ENCODE measurements at regions of chr11 and their contacts with region 1.

Region 1: GRCh38 chr11:82719361-82720105 is 14.1 kb downstream of the FAM181B start:
- DNase-seq: no peak
- ATAC-seq: no peak
- H3K4me3 ChIP-seq: no peak overlapping the region
- H3K27ac ChIP-seq: no peak overlapping the region
- H3K4me1 ChIP-seq: no peaks in the 10 kb centered on the region
- H3K27me3 ChIP-seq: no peaks in the 10 kb centered on the region
- CTCF ChIP-seq: no peak
- POLR2A ChIP-seq: no peak

Region 2: DNA sequence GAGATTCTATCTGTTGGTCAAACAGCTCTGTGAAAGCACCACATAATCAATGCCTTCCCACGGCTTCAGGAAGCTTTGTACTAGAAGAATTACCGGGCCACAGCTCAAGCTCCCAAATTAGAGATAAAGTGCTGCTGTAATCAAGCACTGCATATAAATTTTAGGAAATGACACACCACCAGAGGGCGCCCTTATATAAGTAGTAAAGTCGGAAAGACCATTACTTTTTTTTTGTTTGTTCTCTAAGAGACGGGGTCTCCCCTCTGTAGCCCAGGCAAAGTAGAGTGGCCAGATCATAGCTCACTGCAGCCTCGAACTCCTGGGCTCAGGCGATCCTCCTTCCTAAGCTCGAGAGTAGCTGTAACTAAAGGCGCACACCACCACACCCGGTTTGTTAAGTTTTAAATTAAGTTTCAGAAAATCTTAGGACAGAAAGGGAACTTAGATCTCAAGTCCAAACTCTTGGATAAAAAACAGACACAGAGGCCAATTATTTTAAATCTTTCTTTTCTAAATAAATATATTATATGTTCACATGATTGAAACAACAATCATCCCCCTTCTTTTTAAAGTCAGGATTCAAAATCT is 148.1 kb after region 1 on chr11:
- intact Hi-C with region 1: loop called (anchors 10 kb)
- DNase-seq: peak; percentile 78 to 88 (median 84)
- ATAC-seq: peak; percentile 49
- H3K4me3 ChIP-seq: no peak overlapping the region
- H3K27ac ChIP-seq: no peak overlapping the region
- H3K4me1 ChIP-seq: peaks cover 8% of the 10 kb centered on the region
- H3K27me3 ChIP-seq: no peaks in the 10 kb centered on the region
- CTCF ChIP-seq: peak; percentile 61 to 72 (median 68)
- POLR2A ChIP-seq: no peak